OCI-LY7 (cell line): ENCODE measurements at regions of chr15 and their contacts with region 1.

Region 1: GRCh38 chr15:59399465-59400102 is 26.9 kb upstream of the MYO1E start:
- DNase-seq: peak; percentile 90
- H3K4me3 ChIP-seq: peak overlapping the region; percentile 54
- H3K27ac ChIP-seq: peak overlapping the region; percentile 81
- H3K4me1 ChIP-seq: peaks cover 98% of the 10 kb centered on the region
- CTCF ChIP-seq: peak; percentile 44; the same call in 1 of the 2 replicates

Region 2: DNA sequence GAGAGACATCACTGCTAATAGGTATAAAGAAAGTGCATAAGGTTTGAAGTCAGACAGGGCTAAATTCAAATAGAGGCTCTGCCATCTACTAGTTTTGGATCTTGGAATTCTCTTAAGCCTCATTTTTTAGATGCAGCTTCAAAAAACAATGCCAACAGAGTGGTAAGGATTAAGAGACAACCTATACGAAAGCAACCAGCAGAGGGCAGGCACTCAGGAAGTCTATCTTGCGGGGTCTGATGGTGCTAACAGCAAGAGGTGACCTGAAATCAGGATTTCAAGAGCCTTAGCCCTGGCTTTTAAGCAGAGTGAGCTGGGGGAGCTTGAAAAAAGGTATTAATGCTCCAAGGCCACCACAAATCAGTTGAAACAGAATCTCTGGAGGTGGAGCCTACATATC is 152.2 kb before region 1 on chr15:
- CTCF ChIA-PET with region 1: no interaction called
- POLR2A ChIA-PET with region 1: no interaction called
- intact Hi-C with region 1: loop called (anchors 5 kb)
- DNase-seq: peak; percentile 88
- H3K4me3 ChIP-seq: no peak overlapping the region
- H3K27ac ChIP-seq: no peak overlapping the region
- H3K4me1 ChIP-seq: peaks cover 64% of the 10 kb centered on the region
- CTCF ChIP-seq: peak; percentile 93

Region 3: DNA sequence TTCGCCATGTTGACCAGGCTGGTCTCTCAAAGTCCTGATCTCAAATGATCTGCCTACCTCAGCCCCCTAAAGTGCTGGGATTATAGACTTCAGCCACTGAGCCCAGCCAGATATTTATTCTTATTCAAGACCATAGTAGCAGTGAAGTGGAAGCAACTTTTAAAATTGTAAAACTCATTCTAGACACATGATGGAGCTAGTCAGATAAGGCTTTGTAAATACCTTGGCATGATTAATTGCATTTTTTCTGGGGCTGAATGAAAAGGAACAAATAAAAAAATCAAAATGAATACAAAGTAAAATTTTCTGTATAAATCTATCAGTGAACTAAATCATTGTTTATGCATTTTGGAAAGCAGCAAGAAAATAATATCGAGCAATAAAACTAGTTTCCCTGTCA is 22.9 kb before region 1 on chr15:
- CTCF ChIA-PET with region 1: no interaction called
- POLR2A ChIA-PET with region 1: interaction called, 8 read pairs
- intact Hi-C with region 1: loop called (anchors 2 kb)
- DNase-seq: peak; percentile 65
- H3K4me3 ChIP-seq: no peak overlapping the region
- H3K27ac ChIP-seq: no peak overlapping the region
- H3K4me1 ChIP-seq: peaks cover 24% of the 10 kb centered on the region
- CTCF ChIP-seq: peak; percentile 78

Region 4: DNA sequence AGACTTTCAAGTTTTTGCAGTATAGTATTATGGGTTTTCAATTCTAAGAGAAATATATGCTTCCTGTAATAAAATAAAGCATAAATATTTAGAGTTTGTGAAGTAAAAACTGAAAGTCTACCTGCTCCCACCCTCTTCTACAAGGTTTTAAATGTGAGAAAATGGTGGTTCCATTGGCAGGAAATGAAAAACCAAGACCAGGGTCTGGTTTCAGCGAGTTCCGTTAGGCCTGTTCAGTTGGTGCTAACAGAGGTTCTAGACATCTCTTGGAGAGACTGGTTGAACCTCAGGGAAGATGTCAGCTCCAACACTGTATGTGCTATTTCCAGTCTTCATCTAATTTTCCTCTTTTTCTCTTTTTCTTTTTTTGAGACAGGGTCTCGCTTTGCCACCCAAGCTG is 15.1 kb before region 1 on chr15:
- CTCF ChIA-PET with region 1: no interaction called
- POLR2A ChIA-PET with region 1: interaction called, 19 read pairs
- intact Hi-C with region 1: no loop called
- DNase-seq: no peak
- H3K4me3 ChIP-seq: no peak overlapping the region
- H3K27ac ChIP-seq: no peak overlapping the region
- H3K4me1 ChIP-seq: no peaks in the 10 kb centered on the region
- CTCF ChIP-seq: no peak